Activated CD4-positive, alpha-beta memory T cell treated with anti-CD3 and anti-CD28 coated beads, Interleukin-2, amount 10 ng/mL, durations not matched to agents 7 days and 5 days (primary cell): ENCODE measurements at regions of chr1 and their contacts with region 1.

Region 1: GRCh38 chr1:91511386-91511785 is 10.7 kb downstream of the CDC7 start:
- DNase-seq: no peak
- H3K4me3 Mint-ChIP-seq: no peak overlapping the region
- H3K27ac Mint-ChIP-seq: no peak overlapping the region
- H3K4me1 Mint-ChIP-seq: peaks cover 32% of the 10 kb centered on the region
- H3K27me3 Mint-ChIP-seq: no peaks in the 10 kb centered on the region

Region 2: DNA sequence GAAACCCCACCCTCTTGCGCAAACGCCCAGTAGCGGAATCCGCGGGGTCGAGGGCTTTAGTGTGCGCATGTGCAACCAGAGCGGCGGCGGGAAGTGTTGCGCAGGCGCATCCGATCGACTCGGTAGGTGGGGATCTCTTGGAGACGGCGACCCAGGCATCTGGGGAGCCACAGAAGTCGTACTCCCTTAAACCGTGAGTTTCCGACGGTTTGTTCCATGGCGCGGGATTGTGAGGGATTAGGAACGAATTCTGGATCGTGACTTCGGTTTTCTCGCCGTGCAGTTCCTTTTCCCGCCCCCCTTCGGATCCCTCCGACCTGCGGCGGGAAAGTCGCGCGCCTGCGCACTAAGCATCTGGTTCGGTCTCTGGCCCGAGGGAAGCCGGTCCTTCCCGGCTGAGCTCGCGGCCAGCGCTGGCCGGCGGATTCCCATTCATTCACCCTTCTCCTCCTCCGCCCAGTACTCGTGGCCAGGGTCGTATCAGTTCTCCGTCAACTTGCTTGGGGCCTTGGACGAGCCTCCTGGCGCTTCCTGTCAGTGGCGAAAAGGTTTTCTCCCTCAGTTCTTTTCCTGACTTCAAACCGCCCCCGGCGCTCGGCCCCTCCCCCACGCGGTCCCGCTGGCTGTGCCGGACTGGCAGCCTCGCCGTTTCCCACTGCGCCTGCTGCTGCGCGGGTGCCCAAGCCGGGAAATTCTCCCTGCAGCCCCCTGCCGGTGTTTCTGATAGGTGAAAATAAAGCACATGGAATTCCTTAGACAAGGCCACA is 10.4 kb before region 1 on chr1 and contains the start of gene CDC7:
- CTCF ChIA-PET with region 1: interaction called, 41 read pairs
- POLR2A ChIA-PET with region 1: interaction called, 4 read pairs
- DNase-seq: peak; percentile 85
- H3K4me3 Mint-ChIP-seq: no peak within 1 kb of the TSS
- H3K27ac Mint-ChIP-seq: no peak within 1 kb of the TSS
- H3K4me1 Mint-ChIP-seq: peaks cover 37% of the 10 kb centered on the region
- H3K27me3 Mint-ChIP-seq: no peaks in the 10 kb centered on the region
- total RNA-seq, gene CDC7: 26.7 to 28.1 TPM

Region 3: DNA sequence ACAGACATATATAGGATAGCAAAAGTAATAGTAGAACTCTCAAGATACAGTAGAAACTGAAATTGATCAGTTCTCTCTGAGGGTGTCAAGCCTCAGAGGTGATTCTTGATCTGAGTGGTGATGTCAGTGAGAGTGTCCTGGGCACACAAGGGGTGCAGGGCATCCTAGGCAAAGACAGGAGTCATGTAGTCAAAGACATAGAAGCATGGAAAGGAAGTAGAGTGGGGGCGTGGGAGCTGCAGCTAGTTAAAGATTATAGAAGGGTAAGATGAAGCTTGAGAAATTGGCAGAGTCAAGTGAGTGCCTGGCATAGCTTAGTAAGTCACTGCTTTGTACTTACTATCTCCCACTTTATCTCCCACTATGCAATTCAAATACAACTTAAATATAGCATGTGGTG is 12.1 kb after region 1 on chr1:
- CTCF ChIA-PET with region 1: interaction called, 14 read pairs
- POLR2A ChIA-PET with region 1: interaction called, 8 read pairs
- DNase-seq: peak; percentile 38
- H3K4me3 Mint-ChIP-seq: no peak overlapping the region
- H3K27ac Mint-ChIP-seq: no peak overlapping the region
- H3K4me1 Mint-ChIP-seq: peaks cover 35% of the 10 kb centered on the region
- H3K27me3 Mint-ChIP-seq: no peaks in the 10 kb centered on the region

Region 4: GRCh38 chr1:91803847-91804545 is 292.6 kb after region 1 on chr1:
- CTCF ChIA-PET with region 1: interaction called, 12 read pairs
- POLR2A ChIA-PET with region 1: no interaction called
- DNase-seq: peak; percentile 76
- H3K4me3 Mint-ChIP-seq: peak overlapping the region; percentile 69
- H3K27ac Mint-ChIP-seq: peak overlapping the region; percentile 95
- H3K4me1 Mint-ChIP-seq: peaks cover 74% of the 10 kb centered on the region
- H3K27me3 Mint-ChIP-seq: peaks cover 2% of the 10 kb centered on the region

Region 5: GRCh38 chr1:91879733-91880132 is 368.3 kb after region 1 on chr1:
- CTCF ChIA-PET with region 1: interaction called, 62 read pairs
- POLR2A ChIA-PET with region 1: interaction called, 19 read pairs
- DNase-seq: no peak
- H3K4me3 Mint-ChIP-seq: no peak overlapping the region
- H3K27ac Mint-ChIP-seq: no peak overlapping the region
- H3K4me1 Mint-ChIP-seq: peaks cover 64% of the 10 kb centered on the region
- H3K27me3 Mint-ChIP-seq: peaks cover 4% of the 10 kb centered on the region

Region 6: GRCh38 chr1:91885716-91886506 is 374.5 kb after region 1 on chr1 and contains the start of gene TGFBR3:
- CTCF ChIA-PET with region 1: interaction called, 62 read pairs
- POLR2A ChIA-PET with region 1: interaction called, 19 read pairs
- DNase-seq: peak; percentile 73
- H3K4me3 Mint-ChIP-seq: peak within 1 kb of the TSS; percentile 90
- H3K27ac Mint-ChIP-seq: peak within 1 kb of the TSS; percentile 70
- H3K4me1 Mint-ChIP-seq: peaks cover 39% of the 10 kb centered on the region
- H3K27me3 Mint-ChIP-seq: peaks cover 11% of the 10 kb centered on the region
- total RNA-seq, gene TGFBR3: 35.9 to 41.6 TPM

Region 7: GRCh38 chr1:91924146-91924545 is 412.8 kb after region 1 on chr1:
- CTCF ChIA-PET with region 1: interaction called, 82 read pairs
- POLR2A ChIA-PET with region 1: interaction called, 3 read pairs
- DNase-seq: no peak
- H3K4me3 Mint-ChIP-seq: no peak overlapping the region
- H3K27ac Mint-ChIP-seq: no peak overlapping the region
- H3K4me1 Mint-ChIP-seq: peaks cover 16% of the 10 kb centered on the region
- H3K27me3 Mint-ChIP-seq: peaks cover 1% of the 10 kb centered on the region